Caco-2 (cell line): ENCODE measurements at regions of chr4 and their contacts with region 1.

Region 1: DNA sequence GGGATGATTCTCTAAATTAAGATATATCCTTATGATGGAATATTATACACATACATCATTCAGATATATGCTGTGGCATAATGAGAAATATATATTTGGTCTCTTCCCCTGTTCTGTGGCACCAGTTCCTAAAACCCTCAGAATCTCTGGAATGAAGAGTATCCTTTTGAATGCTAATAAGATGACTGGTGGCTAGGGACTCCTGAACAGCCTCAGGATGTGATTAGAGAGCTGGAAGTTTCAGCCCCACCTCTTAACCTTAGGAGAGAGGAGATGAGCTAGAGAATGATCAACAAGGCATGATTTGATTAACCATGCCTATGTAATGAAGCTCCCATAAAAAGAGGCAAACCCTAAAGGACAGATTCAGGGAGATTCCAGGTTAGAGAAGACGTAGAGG is 632.0 kb downstream of the IQCM start:
- DNase-seq: no peak
- H3K4me3 ChIP-seq: no peak overlapping the region
- H3K4me3 Mint-ChIP-seq: no peak overlapping the region
- H3K27ac Mint-ChIP-seq: no peak overlapping the region
- H3K4me1 ChIP-seq: peaks cover 4% of the 10 kb centered on the region; the same call in 1 of the 2 replicates
- H3K4me1 Mint-ChIP-seq: peaks cover 5% of the 10 kb centered on the region
- H3K27me3 ChIP-seq: no peaks in the 10 kb centered on the region
- H3K27me3 Mint-ChIP-seq: no peaks in the 10 kb centered on the region
- CTCF ChIP-seq: no peak

Region 2: DNA sequence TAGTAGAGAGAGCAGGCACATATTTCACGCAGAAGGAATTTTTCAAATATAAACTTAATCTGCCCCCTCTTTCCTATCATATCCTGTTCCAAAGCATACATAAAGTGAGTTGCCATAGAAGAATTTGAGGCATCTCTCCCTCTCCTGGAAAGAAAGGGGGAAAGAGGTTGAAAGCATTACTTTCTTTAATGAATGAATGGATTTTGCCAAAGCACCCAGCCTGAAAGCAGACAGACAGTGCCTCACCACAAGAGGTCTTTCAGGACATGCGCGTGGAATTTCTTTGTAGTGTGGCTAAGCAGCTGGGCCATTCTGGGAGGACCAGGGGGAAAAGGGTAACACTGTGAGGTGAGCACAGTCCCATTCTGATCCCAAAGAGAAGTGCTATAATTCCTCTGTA is 19.4 kb before region 1 on chr4:
- CTCF ChIA-PET with region 1: no interaction called
- POLR2A ChIA-PET with region 1: no interaction called
- intact Hi-C with region 1: loop called (anchors 1 kb)
- DNase-seq: peak in 1 of 2 experiments; percentile 5
- H3K4me3 ChIP-seq: no peak overlapping the region
- H3K4me3 Mint-ChIP-seq: no peak overlapping the region
- H3K27ac Mint-ChIP-seq: no peak overlapping the region
- H3K4me1 ChIP-seq: peaks cover 30% of the 10 kb centered on the region
- H3K4me1 Mint-ChIP-seq: no peaks in the 10 kb centered on the region
- H3K27me3 ChIP-seq: no peaks in the 10 kb centered on the region
- H3K27me3 Mint-ChIP-seq: no peaks in the 10 kb centered on the region
- CTCF ChIP-seq: no peak